ENCODE measurements at regions of chr13 and their contacts with region 1.

Region 1: GRCh38 chr13:98576963-98577822 is at the start of gene STK24:
- DNase-seq: peak; percentile 66
- H3K4me3 ChIP-seq: peak within 1 kb of the TSS; percentile 64 to 95 (median 76)
- H3K27ac ChIP-seq: peak within 1 kb of the TSS; percentile 82
- H3K4me1 ChIP-seq: peaks cover 31% of the 10 kb centered on the region
- H3K27me3 ChIP-seq: no peaks in the 10 kb centered on the region
- CTCF ChIP-seq: no peak
- total RNA-seq, gene STK24: 114 to 189 TPM

Region 2: DNA sequence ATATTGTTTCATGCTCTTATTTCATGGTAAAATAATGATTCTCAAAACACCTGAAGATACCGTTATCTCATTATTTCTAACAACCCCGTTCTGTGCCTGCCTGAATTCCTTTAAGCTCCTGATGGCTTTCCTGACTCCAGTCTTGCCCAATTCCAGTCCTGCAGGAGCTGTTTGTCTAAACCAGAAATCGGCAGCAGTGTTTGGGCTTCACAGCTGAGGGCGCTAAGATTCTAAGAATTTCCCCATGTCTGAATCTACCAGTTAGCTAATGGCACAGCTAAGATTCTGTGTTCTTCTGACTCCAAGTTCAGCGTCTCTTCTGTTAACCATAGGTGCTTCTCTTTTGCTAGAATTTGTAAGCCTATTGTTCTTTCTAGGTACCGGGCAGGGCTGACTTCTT is 232.1 kb before region 1 on chr13:
- CTCF ChIA-PET with region 1: no interaction called
- dilution Hi-C with region 1: no loop called
- in situ Hi-C with region 1: no loop called
- intact Hi-C with region 1: no loop called
- DNase-seq: no peak
- H3K4me3 ChIP-seq: no peak overlapping the region
- H3K27ac ChIP-seq: no peak overlapping the region
- H3K4me1 ChIP-seq: no peaks in the 10 kb centered on the region
- H3K27me3 ChIP-seq: no peaks in the 10 kb centered on the region
- CTCF ChIP-seq: no peak

Region 3: GRCh38 chr13:98509271-98510155 is 67.7 kb before region 1 on chr13:
- CTCF ChIA-PET with region 1: no interaction called
- dilution Hi-C with region 1: loop called (anchors 5 kb)
- in situ Hi-C with region 1: no loop called
- intact Hi-C with region 1: no loop called
- DNase-seq: peak; percentile 87
- H3K4me3 ChIP-seq: peak overlapping the region in 1 of 3 experiments; percentile 4
- H3K27ac ChIP-seq: peak overlapping the region; percentile 92
- H3K4me1 ChIP-seq: peaks cover 37% of the 10 kb centered on the region
- H3K27me3 ChIP-seq: no peaks in the 10 kb centered on the region
- CTCF ChIP-seq: no peak

Region 4: GRCh38 chr13:98535501-98536354 is 41.5 kb before region 1 on chr13:
- CTCF ChIA-PET with region 1: no interaction called
- dilution Hi-C with region 1: loop called (anchors 5 kb)
- in situ Hi-C with region 1: no loop called
- intact Hi-C with region 1: no loop called
- DNase-seq: peak; percentile 68
- H3K4me3 ChIP-seq: no peak overlapping the region
- H3K27ac ChIP-seq: peak overlapping the region; percentile 28
- H3K4me1 ChIP-seq: peaks cover 25% of the 10 kb centered on the region
- H3K27me3 ChIP-seq: no peaks in the 10 kb centered on the region
- CTCF ChIP-seq: no peak

Region 5: DNA sequence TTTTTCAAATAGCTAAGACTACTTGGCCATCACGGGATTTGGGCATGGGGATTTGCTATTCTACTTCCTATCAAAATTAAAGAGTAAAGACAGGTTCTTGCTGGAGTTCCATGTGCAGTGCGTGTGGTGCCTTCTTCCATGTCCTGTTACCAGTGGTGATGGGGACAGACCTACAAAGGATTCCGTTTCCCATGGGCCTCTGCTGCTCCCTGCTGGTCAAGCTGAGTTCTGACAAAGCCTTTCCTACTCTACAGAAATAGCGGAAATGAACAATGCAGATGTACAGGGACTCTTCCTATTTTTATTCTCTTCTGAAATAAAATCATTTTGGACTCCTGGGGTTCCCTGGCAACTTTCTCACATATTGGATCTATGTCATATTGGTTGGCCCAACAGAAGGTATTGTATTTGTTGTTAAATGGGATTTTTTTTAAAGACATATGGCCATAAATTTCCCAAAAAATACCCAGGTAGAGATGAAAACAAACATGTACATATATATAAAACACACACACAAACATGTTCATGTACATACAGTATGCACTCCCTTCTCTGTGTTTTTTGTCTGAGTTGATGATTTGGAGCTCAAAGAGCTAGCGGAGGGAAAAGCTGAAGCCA is 265.8 kb after region 1 on chr13:
- CTCF ChIA-PET with region 1: no interaction called
- dilution Hi-C with region 1: no loop called
- in situ Hi-C with region 1: no loop called
- intact Hi-C with region 1: loop called (anchors 5 kb)
- DNase-seq: peak; percentile 48
- H3K4me3 ChIP-seq: no peak overlapping the region
- H3K27ac ChIP-seq: no peak overlapping the region
- H3K4me1 ChIP-seq: peaks cover 6% of the 10 kb centered on the region
- H3K27me3 ChIP-seq: no peaks in the 10 kb centered on the region
- CTCF ChIP-seq: peak; percentile 88 to 91

Measured in mammary epithelial cell (primary cell).